Activated CD4-positive, alpha-beta memory T cell treated with anti-CD3 and anti-CD28 coated beads, Interleukin-2, amount 10 ng/mL, durations not matched to agents 7 days and 5 days (primary cell): ENCODE measurements at regions of chr7 and their contacts with region 1.

Region 1: GRCh38 chr7:23013715-23014649 is at the start of gene HYCC1:
- DNase-seq: peak; percentile 99
- H3K4me3 Mint-ChIP-seq: peak within 1 kb of the TSS; percentile 93
- H3K27ac Mint-ChIP-seq: peak within 1 kb of the TSS; percentile 88
- H3K4me1 Mint-ChIP-seq: peaks cover 38% of the 10 kb centered on the region
- H3K27me3 Mint-ChIP-seq: no peaks in the 10 kb centered on the region
- total RNA-seq, gene HYCC1: 103 to 105 TPM

Region 2: DNA sequence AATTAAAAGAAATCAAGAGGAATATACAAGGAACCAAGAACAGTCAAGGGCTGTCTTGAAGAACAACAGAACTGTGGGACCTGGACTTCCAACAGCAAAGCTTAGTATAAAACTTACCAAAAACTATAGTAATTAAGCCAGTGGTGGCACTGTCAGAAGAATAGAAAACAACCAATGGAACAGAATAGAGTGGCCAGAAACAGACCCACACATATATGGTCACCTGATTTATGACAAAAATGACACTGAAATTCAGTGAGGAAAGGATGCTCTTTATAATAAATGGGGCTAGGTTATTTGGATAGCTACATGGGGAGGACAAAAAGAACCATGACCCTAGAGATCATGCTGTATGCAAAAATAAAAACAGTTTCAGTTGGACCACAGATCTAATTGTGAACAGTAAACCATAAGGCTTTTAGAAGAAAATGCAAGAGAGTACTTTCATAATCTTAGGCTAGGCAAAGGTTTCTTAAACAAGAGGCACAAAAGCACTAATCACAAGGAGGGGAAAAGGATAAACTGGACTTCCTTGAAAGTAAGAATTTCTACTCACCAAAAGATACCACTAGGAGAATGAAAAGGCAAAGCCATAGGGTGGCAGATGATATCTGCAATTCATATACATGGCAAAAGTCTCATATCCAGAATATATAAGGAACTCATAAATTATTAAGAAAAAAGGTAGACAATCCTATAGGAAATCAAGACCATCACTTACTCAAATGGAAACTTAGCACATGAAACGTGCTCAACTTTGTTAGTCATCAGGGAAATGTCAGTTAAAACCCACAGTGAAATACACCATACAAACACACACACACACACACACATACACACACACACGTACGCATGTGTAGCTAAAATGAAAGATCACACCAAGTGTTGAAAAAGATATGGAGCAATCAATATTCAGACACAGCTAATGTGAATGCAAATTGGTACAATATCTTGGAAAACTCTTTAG is 20.8 kb before region 1 on chr7:
- CTCF ChIA-PET with region 1: no interaction called
- POLR2A ChIA-PET with region 1: interaction called, 28 read pairs
- DNase-seq: peak; percentile 49
- H3K4me3 Mint-ChIP-seq: no peak overlapping the region
- H3K27ac Mint-ChIP-seq: peak overlapping the region; percentile 40
- H3K4me1 Mint-ChIP-seq: peaks cover 67% of the 10 kb centered on the region
- H3K27me3 Mint-ChIP-seq: no peaks in the 10 kb centered on the region

Region 3: GRCh38 chr7:23000597-23001360 is 13.2 kb before region 1 on chr7:
- CTCF ChIA-PET with region 1: interaction called, 13 read pairs
- POLR2A ChIA-PET with region 1: interaction called, 38 read pairs
- DNase-seq: no peak
- H3K4me3 Mint-ChIP-seq: no peak overlapping the region
- H3K27ac Mint-ChIP-seq: peak overlapping the region; percentile 74
- H3K4me1 Mint-ChIP-seq: peaks cover 63% of the 10 kb centered on the region
- H3K27me3 Mint-ChIP-seq: no peaks in the 10 kb centered on the region

Region 4: GRCh38 chr7:23072048-23072447 is 58.1 kb after region 1 on chr7:
- CTCF ChIA-PET with region 1: no interaction called
- POLR2A ChIA-PET with region 1: no interaction called
- DNase-seq: no peak
- H3K4me3 Mint-ChIP-seq: no peak overlapping the region
- H3K27ac Mint-ChIP-seq: no peak overlapping the region
- H3K4me1 Mint-ChIP-seq: no peaks in the 10 kb centered on the region
- H3K27me3 Mint-ChIP-seq: peaks cover 25% of the 10 kb centered on the region